Natural killer cell (primary cell): ENCODE measurements at regions of chr9 and their contacts with region 1.

Region 1: DNA sequence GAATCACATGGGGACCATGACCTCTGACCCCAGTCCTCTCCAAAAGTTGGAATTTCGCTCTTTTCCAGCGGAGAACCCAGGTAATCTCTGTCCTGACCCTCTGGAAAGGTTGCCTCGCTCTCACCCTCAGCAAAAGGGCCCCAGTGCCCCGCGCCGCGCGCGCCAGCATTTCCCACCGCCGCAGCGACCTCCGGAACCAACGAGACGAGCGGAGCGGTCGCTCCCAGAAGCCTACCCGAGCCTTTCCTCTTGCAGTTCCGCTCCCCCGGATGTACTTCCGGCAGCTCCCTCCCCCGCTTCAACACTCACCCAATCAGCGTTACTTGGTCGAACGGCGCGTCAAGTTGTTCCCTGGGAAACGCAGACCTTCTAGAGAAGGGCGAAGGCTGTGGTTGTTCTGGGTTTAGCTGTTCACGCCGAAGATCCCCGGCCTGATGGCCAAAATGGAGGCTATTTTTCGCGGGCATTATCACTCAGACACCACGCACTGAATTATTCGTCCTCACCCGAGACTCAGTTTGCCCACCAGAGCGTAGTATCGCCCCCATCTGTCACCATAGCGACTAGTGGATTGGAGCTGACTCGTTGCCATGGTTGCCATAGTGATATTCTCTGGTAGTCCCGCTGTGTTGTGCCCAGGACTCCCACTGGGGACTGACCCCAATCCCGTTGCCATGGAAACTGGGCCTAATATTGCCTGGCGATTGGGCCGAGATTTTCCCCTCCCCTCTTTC is at the start of gene STOML2:
- DNase-seq: peak; percentile 84 to 97
- ATAC-seq: peak; percentile 96 to 98 (median 98)
- H3K4me3 ChIP-seq: peak within 1 kb of the TSS; percentile 93
- H3K4me3 Mint-ChIP-seq: peak within 1 kb of the TSS; percentile 99
- H3K27ac ChIP-seq: peak within 1 kb of the TSS; percentile 95
- H3K27ac Mint-ChIP-seq: peak within 1 kb of the TSS; percentile 94 to 97
- H3K4me1 ChIP-seq: peaks cover 19% of the 10 kb centered on the region
- H3K4me1 Mint-ChIP-seq: peaks cover 30 to 31% of the 10 kb centered on the region in 2 donors
- H3K27me3 ChIP-seq: no peaks in the 10 kb centered on the region
- H3K27me3 Mint-ChIP-seq: no peaks in the 10 kb centered on the region
- CTCF ChIP-seq: no peak
- total RNA-seq, gene STOML2: 41.4 to 43.9 (median 41.6) TPM

Region 2: GRCh38 chr9:34989003-34989945 is 113.8 kb before region 1 on chr9 and contains the start of gene DNAJB5:
- intact Hi-C with region 1: loop called (anchors 2 kb)
- DNase-seq: peak; percentile 99
- ATAC-seq: peak; percentile 94 to 99 (median 96)
- H3K4me3 ChIP-seq: peak within 1 kb of the TSS; percentile 73
- H3K4me3 Mint-ChIP-seq: peak within 1 kb of the TSS; percentile 98
- H3K27ac ChIP-seq: peak within 1 kb of the TSS; percentile 45
- H3K27ac Mint-ChIP-seq: peak within 1 kb of the TSS; percentile 83 to 84
- H3K4me1 ChIP-seq: peaks cover 35% of the 10 kb centered on the region
- H3K4me1 Mint-ChIP-seq: peaks cover 27 to 36% of the 10 kb centered on the region in 2 donors
- H3K27me3 ChIP-seq: no peaks in the 10 kb centered on the region
- H3K27me3 Mint-ChIP-seq: peaks cover 0 to 2% of the 10 kb centered on the region in 2 donors
- CTCF ChIP-seq: no peak
- total RNA-seq, gene DNAJB5: 1.1 to 2.4 (median 1.9) TPM

Region 3: DNA sequence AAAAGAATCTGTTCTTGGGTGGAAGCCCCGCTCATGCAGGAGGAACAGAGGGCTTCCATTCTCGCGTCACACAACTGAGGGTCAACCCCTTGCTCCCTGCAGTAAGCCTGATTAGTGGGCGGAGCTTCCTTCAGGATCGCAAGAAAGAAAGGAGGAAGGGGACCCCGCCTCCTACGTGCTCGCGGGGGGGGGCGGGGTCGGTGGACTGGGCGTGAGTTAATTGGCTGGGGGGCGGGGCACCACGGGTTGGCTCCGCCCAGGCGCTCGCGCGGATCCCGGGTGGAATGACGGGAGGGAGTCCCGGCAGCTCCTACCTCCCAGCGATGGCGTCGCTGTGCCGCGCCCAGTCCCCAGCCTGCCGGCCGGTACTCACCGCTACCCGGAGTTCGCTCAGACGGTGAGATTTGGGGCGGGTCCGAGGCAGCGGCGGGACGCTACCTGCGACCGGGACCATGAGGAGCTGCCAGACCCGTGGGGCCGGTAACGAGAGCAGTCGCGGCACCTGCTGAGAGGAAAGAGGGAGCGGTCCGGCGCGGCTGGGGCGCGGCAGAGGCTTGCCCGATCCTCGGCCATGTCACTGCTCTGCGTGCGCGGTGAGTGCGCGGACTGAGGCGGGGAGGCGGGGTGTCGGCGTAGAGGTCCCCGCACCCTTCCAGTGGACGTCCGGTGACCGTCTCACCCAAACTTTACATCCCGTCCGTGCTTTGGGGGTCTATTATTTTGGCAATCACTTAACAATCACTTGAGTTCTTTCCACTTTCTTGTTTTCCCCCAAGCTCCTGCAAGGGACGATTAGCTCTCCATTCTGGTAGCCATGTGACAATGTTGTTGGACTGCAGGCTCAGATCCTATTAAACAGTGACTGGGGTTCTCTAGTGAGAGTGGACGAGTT is 58.9 kb after region 1 on chr9 and contains the start of gene UNC13B:
- intact Hi-C with region 1: no loop called
- DNase-seq: peak; percentile 58 to 83
- ATAC-seq: peak; percentile 81 to 86 (median 83)
- H3K4me3 ChIP-seq: peak within 1 kb of the TSS; percentile 73
- H3K4me3 Mint-ChIP-seq: peak within 1 kb of the TSS; percentile 92
- H3K27ac ChIP-seq: no peak within 1 kb of the TSS
- H3K27ac Mint-ChIP-seq: peak within 1 kb of the TSS in 1 of 2 donors; percentile 77
- H3K4me1 ChIP-seq: peaks cover 6% of the 10 kb centered on the region
- H3K4me1 Mint-ChIP-seq: peaks cover 9 to 14% of the 10 kb centered on the region in 2 donors
- H3K27me3 ChIP-seq: no peaks in the 10 kb centered on the region
- H3K27me3 Mint-ChIP-seq: peaks cover 7 to 20% of the 10 kb centered on the region in 2 donors
- CTCF ChIP-seq: no peak
- total RNA-seq, gene UNC13B: 0.21 to 0.78 (median 0.27) TPM